Right ventricle myocardium superior (tissue), 1 donor: ENCODE measurements at regions of chr15 and their contacts with region 1.

Region 1: DNA sequence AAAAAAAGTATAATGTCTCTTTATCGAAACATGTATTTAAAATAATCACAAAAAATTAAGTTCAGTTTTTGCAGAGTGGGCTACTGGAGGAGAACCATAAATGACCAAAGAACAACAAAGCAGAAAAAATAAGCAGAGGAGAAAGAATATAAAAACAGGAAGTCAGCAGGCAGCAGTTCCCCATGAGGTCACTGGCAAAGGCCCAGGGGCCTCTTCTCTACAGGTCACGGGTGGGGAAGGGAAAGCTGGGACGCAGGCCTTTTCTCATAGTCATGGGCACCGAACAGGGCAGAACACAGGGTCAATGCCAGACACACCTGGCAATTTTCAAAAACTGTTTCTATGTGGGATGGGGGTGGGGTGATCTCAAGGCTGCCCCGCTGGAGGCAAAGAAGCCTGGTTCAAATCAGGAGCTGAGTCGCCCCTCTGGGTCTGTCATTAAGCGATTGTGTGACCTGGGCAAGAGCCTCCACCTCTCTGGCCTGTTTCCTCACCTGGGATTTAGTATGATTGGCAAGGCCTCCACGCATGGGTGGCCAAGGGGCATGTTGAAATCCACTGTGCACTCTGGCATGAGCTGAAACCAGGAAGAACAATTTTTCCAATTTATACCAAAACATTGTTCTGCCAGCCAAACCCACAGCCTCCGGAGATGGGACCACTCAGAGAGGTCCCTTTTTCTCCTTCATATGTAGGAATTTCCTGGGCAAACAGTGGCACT is 43.8 kb upstream of the UACA start:
- DNase-seq: peak; percentile 79
- ATAC-seq: peak; percentile 55

Region 2: GRCh38 chr15:70679919-70680231 is 127.3 kb before region 1 on chr15:
- intact Hi-C with region 1: loop called (anchors 5 kb)
- DNase-seq: no peak
- ATAC-seq: no peak